ENCODE measurements at regions of chr1 and their contacts with region 1.

Region 1: DNA sequence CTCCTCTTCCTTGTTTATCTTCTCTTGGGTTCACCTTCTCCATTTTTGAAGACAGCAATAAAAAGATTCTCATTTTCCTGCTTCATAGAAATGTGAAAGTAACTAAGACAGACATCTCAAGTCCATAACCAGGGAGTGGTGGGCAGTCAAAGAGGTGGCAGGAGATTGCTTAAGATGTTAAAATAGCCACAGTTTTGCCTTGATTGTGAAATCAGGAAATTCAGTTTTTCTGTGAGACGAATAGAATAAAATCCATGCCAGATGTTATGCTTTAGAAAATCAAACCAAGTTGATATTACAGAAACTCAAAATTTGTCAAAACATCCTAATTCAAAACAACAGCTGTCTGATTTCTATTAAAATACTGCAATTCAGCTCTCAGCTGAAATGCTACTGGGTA is 57.2 kb downstream of the TNN start:
- DNase-seq: no peak
- ATAC-seq: no peak
- H3K4me3 Mint-ChIP-seq: no peak overlapping the region
- H3K27ac Mint-ChIP-seq: 0 out of 2 replicates have a peak overlapping the region, but pooled peaks have one; percentile 51
- H3K4me1 Mint-ChIP-seq: peaks cover 23% of the 10 kb centered on the region
- H3K27me3 Mint-ChIP-seq: no peaks in the 10 kb centered on the region
- CTCF ChIP-seq: no peak

Region 2: GRCh38 chr1:174999216-174999925 is 125.5 kb before region 1 on chr1:
- CTCF ChIA-PET with region 1: interaction called, 11 read pairs
- POLR2A ChIA-PET with region 1: no interaction called
- DNase-seq: peak; percentile 94
- ATAC-seq: peak; percentile 78
- H3K4me3 Mint-ChIP-seq: no peak overlapping the region
- H3K27ac Mint-ChIP-seq: no peak overlapping the region
- H3K4me1 Mint-ChIP-seq: peaks cover 32% of the 10 kb centered on the region
- H3K27me3 Mint-ChIP-seq: no peaks in the 10 kb centered on the region
- CTCF ChIP-seq: no peak

Region 3: DNA sequence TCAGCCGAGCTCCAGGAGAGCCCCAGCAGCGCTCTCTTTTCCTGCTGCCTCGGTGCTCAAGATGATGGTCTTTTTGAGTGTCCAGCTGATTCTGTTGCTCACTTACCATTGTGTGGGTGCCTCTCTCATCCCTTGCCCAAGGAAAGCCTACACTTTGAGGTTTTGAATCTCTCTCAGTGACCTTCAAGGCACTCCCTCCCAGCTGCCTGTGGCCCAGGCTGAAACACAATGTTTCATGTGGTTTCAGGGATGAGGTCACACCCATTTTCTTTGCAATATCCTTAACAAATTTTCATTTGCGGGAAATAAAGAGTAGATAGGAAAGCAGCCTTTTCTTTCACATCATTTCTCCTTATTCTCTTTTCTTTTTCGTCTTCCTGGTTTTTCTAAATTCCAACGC is 89.0 kb before region 1 on chr1:
- CTCF ChIA-PET with region 1: interaction called, 20 read pairs
- POLR2A ChIA-PET with region 1: interaction called, 4 read pairs
- DNase-seq: no peak
- ATAC-seq: no peak
- H3K4me3 Mint-ChIP-seq: no peak overlapping the region; the same call in 1 of the 2 replicates
- H3K27ac Mint-ChIP-seq: no peak overlapping the region
- H3K4me1 Mint-ChIP-seq: peaks cover 22% of the 10 kb centered on the region
- H3K27me3 Mint-ChIP-seq: no peaks in the 10 kb centered on the region
- CTCF ChIP-seq: no peak

Region 4: GRCh38 chr1:175067362-175068106 is 57.3 kb before region 1 on chr1 and contains the start of gene TNN:
- CTCF ChIA-PET with region 1: interaction called, 20 read pairs
- POLR2A ChIA-PET with region 1: no interaction called
- DNase-seq: no peak
- ATAC-seq: peak; percentile 67
- H3K4me3 Mint-ChIP-seq: no peak within 1 kb of the TSS
- H3K27ac Mint-ChIP-seq: no peak within 1 kb of the TSS
- H3K4me1 Mint-ChIP-seq: peaks cover 23% of the 10 kb centered on the region
- H3K27me3 Mint-ChIP-seq: peaks cover 2% of the 10 kb centered on the region
- CTCF ChIP-seq: no peak
- total RNA-seq, gene TNN: 0.23 to 0.44 TPM (median 0.27 TPM) in 3 replicates

Region 5: DNA sequence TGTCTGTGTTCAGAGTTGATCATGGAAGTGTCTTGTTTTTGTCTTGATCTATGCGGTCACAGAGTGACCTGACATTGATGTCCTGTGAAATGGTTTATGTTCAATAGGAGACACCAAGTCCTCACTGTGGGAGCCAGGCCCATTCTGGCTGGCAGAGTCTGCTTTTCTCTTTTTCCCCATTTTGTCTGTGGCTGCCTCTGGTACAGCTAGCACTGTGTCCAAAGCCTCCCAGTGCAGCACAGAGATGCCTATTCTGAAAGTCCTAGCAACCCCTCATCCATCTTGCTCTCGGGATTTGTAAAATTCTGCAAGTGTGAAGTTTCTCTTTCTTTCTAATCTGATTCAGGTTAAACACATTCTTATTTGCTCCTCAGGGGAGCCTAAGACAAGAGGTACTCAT is 42.9 kb before region 1 on chr1:
- CTCF ChIA-PET with region 1: interaction called, 29 read pairs
- POLR2A ChIA-PET with region 1: no interaction called
- DNase-seq: no peak
- ATAC-seq: no peak
- H3K4me3 Mint-ChIP-seq: no peak overlapping the region
- H3K27ac Mint-ChIP-seq: no peak overlapping the region
- H3K4me1 Mint-ChIP-seq: peaks cover 1% of the 10 kb centered on the region; the same call in 1 of the 2 replicates
- H3K27me3 Mint-ChIP-seq: peaks cover 3% of the 10 kb centered on the region; the same call in 1 of the 2 replicates
- CTCF ChIP-seq: no peak

Region 6: GRCh38 chr1:175319418-175320230 is 194.8 kb after region 1 on chr1:
- CTCF ChIA-PET with region 1: interaction called, 12 read pairs
- POLR2A ChIA-PET with region 1: no interaction called
- DNase-seq: peak; percentile 73
- ATAC-seq: peak; percentile 85
- H3K4me3 Mint-ChIP-seq: no peak overlapping the region
- H3K27ac Mint-ChIP-seq: no peak overlapping the region
- H3K4me1 Mint-ChIP-seq: peaks cover 4% of the 10 kb centered on the region; the same call in 1 of the 2 replicates
- H3K27me3 Mint-ChIP-seq: no peaks in the 10 kb centered on the region
- CTCF ChIP-seq: peak; percentile 89